ENCODE measurements at regions of chr11 and their contacts with region 1.

Region 1: DNA sequence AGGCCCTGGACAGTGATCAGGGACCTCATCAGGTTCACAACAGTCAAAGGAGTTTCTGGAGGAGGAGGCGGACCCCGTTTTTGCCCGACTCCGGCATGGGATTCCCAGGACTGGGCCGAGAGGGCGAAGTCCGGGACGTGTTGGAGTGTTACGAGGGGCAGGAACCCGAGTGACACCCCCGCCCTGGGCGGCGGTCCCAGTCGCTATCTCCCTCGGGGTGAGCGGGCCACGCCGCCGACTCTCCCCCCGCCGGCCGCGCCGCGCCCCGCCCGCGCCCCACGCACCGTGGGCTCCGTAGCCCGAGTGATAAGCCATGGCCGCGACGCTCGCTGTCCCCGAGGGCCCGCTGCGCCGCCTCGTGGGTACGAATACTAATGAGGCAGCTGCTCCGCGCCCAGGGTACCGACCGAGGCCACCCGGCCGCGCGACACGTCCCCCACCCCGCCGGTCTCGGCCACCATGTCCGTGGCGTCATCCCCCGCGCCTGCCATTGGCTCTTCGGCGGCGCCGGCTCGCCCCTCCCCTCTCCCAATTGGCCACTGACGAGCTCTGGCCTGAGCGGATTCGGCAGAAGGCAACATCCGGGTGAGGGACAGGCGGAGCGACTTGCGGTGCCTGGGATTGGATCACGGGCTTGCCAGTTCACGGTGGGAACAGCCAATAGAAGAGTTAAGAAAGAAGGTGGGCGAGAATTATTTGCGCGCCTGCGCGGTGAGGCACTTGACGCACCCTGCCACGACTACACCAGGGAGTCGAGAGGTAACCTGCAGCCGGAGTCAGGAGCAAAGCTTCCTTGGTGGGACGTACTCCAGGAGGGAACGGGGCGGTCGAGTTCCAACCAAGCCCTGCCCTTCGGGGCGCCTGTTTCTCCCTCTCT is at the start of gene YIF1A:
- DNase-seq: peak; percentile 96 to 100 (median 98)
- ATAC-seq: peak; percentile 98
- H3K4me3 ChIP-seq: peak within 1 kb of the TSS; percentile 84
- H3K27ac ChIP-seq: peak within 1 kb of the TSS; percentile 80
- H3K4me1 ChIP-seq: peaks cover 19 to 61% of the 10 kb centered on the region in 2 experiments
- H3K27me3 ChIP-seq: no peaks in the 10 kb centered on the region
- CTCF ChIP-seq: peak in 2 of 3 experiments; percentile 30 to 39; a peak in 4 of 6 replicates
- EP300 ChIP-seq: no peak
- POLR2A ChIP-seq: peak; percentile 91
- RAD21 ChIP-seq: no peak; a peak in 1 of 4 replicates
- polyA plus RNA-seq, gene YIF1A: 8.6 to 33.6 TPM

Region 2: GRCh38 chr11:66268283-66268951 is 20.5 kb before region 1 on chr11 and contains the start of gene RAB1B:
- CTCF ChIA-PET with region 1: no interaction called
- POLR2A ChIA-PET with region 1: interaction called, 17 read pairs
- in situ Hi-C with region 1: no loop called
- intact Hi-C with region 1: no loop called
- DNase-seq: peak; percentile 91 to 100 (median 96)
- ATAC-seq: peak; percentile 92
- H3K4me3 ChIP-seq: peak within 1 kb of the TSS; percentile 100
- H3K27ac ChIP-seq: peak within 1 kb of the TSS; percentile 95
- H3K4me1 ChIP-seq: peaks cover 5 to 47% of the 10 kb centered on the region in 2 experiments; a peak in 4 of 5 replicates
- H3K27me3 ChIP-seq: no peaks in the 10 kb centered on the region
- CTCF ChIP-seq: no peak
- EP300 ChIP-seq: no peak
- POLR2A ChIP-seq: peak; percentile 82; the same call in 1 of the 2 replicates
- RAD21 ChIP-seq: no peak
- polyA plus RNA-seq, gene RAB1B: 5.6 to 16.0 TPM

Region 3: DNA sequence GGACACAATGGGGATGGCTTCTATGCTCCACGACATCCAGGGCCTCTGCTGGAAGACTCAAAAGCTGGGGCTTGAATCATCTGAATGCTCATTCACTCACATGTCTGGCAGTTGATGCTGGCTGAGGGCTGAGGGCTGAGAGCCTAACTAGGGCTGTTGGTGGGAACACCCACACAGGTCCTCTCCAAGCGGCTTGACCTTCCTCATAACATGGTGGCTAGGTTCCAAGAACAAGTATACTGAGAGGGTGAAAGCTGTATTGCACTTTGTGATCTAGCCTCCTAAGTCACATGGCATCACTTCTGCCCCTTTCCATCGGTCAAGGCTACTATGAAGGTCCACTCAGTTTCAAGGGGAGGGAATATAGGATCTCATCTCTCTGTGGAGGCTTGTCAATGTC is 10.3 kb after region 1 on chr11:
- CTCF ChIA-PET with region 1: no interaction called
- POLR2A ChIA-PET with region 1: interaction called, 18 read pairs
- in situ Hi-C with region 1: no loop called
- intact Hi-C with region 1: no loop called
- DNase-seq: no peak
- ATAC-seq: peak; percentile 37; the same call in 1 of the 3 replicates
- H3K4me3 ChIP-seq: no peak overlapping the region
- H3K27ac ChIP-seq: no peak overlapping the region
- H3K4me1 ChIP-seq: peaks cover 0 to 22% of the 10 kb centered on the region in 2 experiments; a peak in 1 of 5 replicates
- H3K27me3 ChIP-seq: peaks cover 0 to 8% of the 10 kb centered on the region in 2 experiments; a peak in 2 of 5 replicates
- CTCF ChIP-seq: no peak
- EP300 ChIP-seq: no peak
- POLR2A ChIP-seq: no peak
- RAD21 ChIP-seq: no peak